ENCODE measurements at regions of chr10 and their contacts with region 1.

Region 1: DNA sequence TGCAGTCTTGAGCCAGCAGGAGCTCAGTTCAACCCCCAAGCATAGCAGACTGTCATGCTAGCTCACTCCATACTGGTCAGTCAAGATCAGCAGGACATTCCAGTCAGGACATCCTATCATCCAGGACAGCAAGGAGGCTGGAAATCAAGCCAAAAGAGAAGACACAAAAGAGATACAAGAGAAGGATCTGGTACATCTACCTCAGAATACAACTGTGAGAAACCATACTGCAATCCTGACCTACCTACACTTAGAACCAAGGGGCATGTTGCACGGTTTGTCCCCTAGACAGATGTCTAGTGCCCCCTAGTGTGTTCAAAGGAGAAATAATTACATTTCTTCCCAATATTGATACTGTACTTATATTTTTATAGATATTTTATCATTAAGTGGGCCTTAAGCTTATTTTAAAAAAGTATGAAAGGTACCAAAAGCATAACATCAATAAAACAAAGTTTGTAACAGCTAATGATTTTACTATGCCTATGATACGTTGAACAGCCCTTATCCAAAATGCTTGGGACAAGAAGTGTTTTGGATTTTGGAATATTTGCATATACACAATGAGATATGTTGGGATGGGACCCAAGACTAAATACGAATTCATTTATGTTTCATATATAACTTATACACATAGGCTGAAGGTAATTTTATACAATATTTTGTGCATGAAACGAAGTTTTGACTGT is 26.7 kb downstream of the ERCC6 start:
- DNase-seq: peak; percentile 16
- ATAC-seq: peak; percentile 87
- H3K4me3 ChIP-seq: no peak overlapping the region
- H3K27ac ChIP-seq: no peak overlapping the region
- H3K4me1 ChIP-seq: no peaks in the 10 kb centered on the region
- H3K27me3 ChIP-seq: no peaks in the 10 kb centered on the region
- CTCF ChIP-seq: peak; percentile 58 to 79 (median 66); a peak in 5 of 6 replicates
- POLR2A ChIP-seq: no peak
- RAD21 ChIP-seq: peak; percentile 85

Region 2: DNA sequence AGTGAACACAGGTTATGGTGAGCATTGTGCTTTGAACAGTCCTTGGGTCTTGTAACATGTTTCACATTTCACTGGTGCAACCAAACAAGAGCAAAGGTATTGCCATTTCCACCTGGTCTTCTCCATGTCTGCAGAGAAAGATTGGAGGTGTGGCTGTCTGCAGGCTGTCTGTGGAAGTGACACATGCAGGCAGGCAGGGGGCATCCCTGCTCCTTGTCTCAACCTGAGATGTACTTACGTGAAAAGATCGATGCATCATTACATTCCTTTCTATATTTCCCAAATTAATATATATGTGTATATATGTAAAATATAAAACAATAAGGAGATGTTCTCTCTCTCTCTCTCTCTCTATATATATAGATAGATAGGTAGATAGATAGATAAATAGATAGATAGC is 626.9 kb before region 1 on chr10:
- CTCF ChIA-PET with region 1: no interaction called
- POLR2A ChIA-PET with region 1: no interaction called
- RAD21 ChIA-PET with region 1: no interaction called
- intact Hi-C with region 1: loop called (anchors 1 kb)
- DNase-seq: peak; percentile 8
- ATAC-seq: peak; percentile 86
- H3K4me3 ChIP-seq: no peak overlapping the region
- H3K27ac ChIP-seq: no peak overlapping the region
- H3K4me1 ChIP-seq: no peaks in the 10 kb centered on the region
- H3K27me3 ChIP-seq: peaks cover 22% of the 10 kb centered on the region; the same call in 1 of the 2 replicates
- CTCF ChIP-seq: peak; percentile 36 to 63 (median 43); a peak in 5 of 6 replicates
- POLR2A ChIP-seq: no peak
- RAD21 ChIP-seq: peak; percentile 51

Region 3: GRCh38 chr10:48976196-48976595 is 536.1 kb before region 1 on chr10:
- CTCF ChIA-PET with region 1: interaction called, 8 read pairs
- POLR2A ChIA-PET with region 1: no interaction called
- RAD21 ChIA-PET with region 1: interaction called in 1 of 2 experiments, 3 read pairs
- intact Hi-C with region 1: loop called (anchors 1 kb)
- DNase-seq: peak; percentile 18
- ATAC-seq: peak; percentile 92
- H3K4me3 ChIP-seq: no peak overlapping the region
- H3K27ac ChIP-seq: no peak overlapping the region
- H3K4me1 ChIP-seq: no peaks in the 10 kb centered on the region
- H3K27me3 ChIP-seq: peaks cover 14% of the 10 kb centered on the region; the same call in 1 of the 2 replicates
- CTCF ChIP-seq: peak; percentile 48 to 53 (median 49); a peak in 5 of 6 replicates
- POLR2A ChIP-seq: no peak
- RAD21 ChIP-seq: peak; percentile 64

Region 4: GRCh38 chr10:48981310-48981907 is 530.9 kb before region 1 on chr10:
- CTCF ChIA-PET with region 1: interaction called, 8 read pairs
- POLR2A ChIA-PET with region 1: no interaction called
- RAD21 ChIA-PET with region 1: interaction called in 1 of 2 experiments, 3 read pairs
- intact Hi-C with region 1: loop called (anchors 1 kb)
- DNase-seq: peak; percentile 42
- ATAC-seq: peak; percentile 99
- H3K4me3 ChIP-seq: no peak overlapping the region
- H3K27ac ChIP-seq: no peak overlapping the region
- H3K4me1 ChIP-seq: no peaks in the 10 kb centered on the region
- H3K27me3 ChIP-seq: no peaks in the 10 kb centered on the region
- CTCF ChIP-seq: peak; percentile 53 to 88 (median 86); a peak in 5 of 6 replicates
- POLR2A ChIP-seq: no peak
- RAD21 ChIP-seq: peak; percentile 72

Region 5: DNA sequence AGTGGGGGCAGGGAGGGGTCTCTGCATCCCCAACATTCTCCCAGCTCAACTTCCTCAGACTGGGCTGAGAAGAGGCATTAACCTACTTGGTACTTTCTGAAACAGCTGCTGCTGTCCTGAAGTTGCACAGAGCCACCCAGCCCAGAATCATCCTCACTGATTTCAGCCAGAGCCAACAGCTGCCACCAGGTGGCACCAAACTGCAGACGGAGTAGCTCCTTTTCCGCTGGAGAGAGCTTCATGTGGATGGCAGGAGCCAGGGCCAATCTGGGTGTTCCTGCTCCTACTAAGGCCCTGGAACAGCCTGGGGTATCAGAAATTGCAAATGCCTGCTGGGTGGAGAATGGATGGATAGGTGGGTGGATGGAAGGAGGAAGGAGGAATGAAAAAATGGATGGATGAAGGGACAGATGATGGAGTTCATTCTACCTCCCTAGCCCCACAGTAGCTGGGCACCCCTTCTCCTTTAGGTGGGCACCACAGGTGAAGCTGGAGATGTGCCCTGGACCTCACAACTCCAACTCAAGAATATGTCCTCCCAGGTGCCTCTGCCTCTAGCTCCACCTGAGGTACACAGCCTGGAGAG is 104.6 kb before region 1 on chr10:
- CTCF ChIA-PET with region 1: interaction called, 123 read pairs
- POLR2A ChIA-PET with region 1: no interaction called
- RAD21 ChIA-PET with region 1: interaction called, 10 to 14 read pairs
- intact Hi-C with region 1: loop called (anchors 1 kb)
- DNase-seq: peak; percentile 57
- ATAC-seq: peak; percentile 93
- H3K4me3 ChIP-seq: no peak overlapping the region
- H3K27ac ChIP-seq: no peak overlapping the region
- H3K4me1 ChIP-seq: no peaks in the 10 kb centered on the region
- H3K27me3 ChIP-seq: peaks cover 36% of the 10 kb centered on the region
- CTCF ChIP-seq: peak; percentile 85 to 96 (median 94)
- POLR2A ChIP-seq: no peak
- RAD21 ChIP-seq: peak; percentile 88

Measured in HCT116 (cell line).